ENCODE measurements at regions of chr5 and their contacts with region 1.

Region 1: GRCh38 chr5:66171349-66172344 is 27.5 kb downstream of the SREK1 start:
- DNase-seq: peak; percentile 68 to 81 (median 78)
- H3K4me3 ChIP-seq: no peak overlapping the region
- H3K4me3 Mint-ChIP-seq: peak overlapping the region in 3 of 8 donors; percentile 18 to 53 (median 26)
- H3K27ac ChIP-seq: peak overlapping the region; percentile 43
- H3K27ac Mint-ChIP-seq: peak overlapping the region; percentile 86 to 96 (median 90)
- H3K4me1 ChIP-seq: peaks cover 14% of the 10 kb centered on the region
- H3K4me1 Mint-ChIP-seq: peaks cover 18 to 33% (median 20%) of the 10 kb centered on the region in 4 donors
- H3K27me3 ChIP-seq: no peaks in the 10 kb centered on the region
- H3K27me3 Mint-ChIP-seq: no peaks in the 10 kb centered on the region

Region 2: GRCh38 chr5:65047948-65048690 is 1123.5 kb before region 1 on chr5:
- CTCF ChIA-PET with region 1: no interaction called
- POLR2A ChIA-PET with region 1: no interaction called
- intact Hi-C with region 1: no loop called
- DNase-seq: no peak
- H3K4me3 ChIP-seq: no peak overlapping the region
- H3K4me3 Mint-ChIP-seq: no peak overlapping the region
- H3K27ac ChIP-seq: no peak overlapping the region
- H3K27ac Mint-ChIP-seq: no peak overlapping the region
- H3K4me1 ChIP-seq: no peaks in the 10 kb centered on the region
- H3K4me1 Mint-ChIP-seq: no peaks in the 10 kb centered on the region
- H3K27me3 ChIP-seq: no peaks in the 10 kb centered on the region
- H3K27me3 Mint-ChIP-seq: no peaks in the 10 kb centered on the region

Region 3: DNA sequence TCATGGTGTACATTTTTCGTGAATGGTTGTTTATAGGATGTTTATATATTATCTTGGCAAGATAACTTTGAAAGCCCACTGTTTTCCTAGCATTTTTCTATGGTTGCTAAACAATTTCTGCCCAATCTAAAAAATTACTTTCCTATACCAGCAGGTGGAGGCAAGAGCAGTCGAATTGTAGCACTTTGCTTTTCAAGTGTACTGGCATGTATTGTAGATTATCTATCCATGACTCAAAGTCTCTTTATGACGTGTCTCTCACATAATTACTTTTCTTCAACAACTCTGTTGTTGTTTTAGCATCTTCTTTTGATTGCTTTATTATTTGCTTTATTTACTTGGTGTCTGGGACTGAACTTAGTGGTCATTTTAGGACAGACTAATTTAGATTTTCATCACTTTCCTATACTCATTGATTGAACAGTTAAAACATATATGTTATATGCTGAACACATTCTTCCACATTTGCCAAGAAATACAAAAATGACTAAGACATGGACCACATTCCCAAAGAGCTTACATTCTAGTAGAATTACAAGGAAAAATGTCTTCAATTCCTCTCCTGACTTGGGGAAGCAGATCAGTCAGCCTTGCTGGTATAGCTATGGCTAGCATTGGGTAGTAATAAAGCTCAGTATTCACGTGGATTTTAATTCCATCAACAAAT is 428.9 kb before region 1 on chr5:
- CTCF ChIA-PET with region 1: no interaction called
- POLR2A ChIA-PET with region 1: no interaction called
- intact Hi-C with region 1: loop called (anchors 1 kb)
- DNase-seq: peak in 4 of 5 donors; percentile 15 to 30 (median 17)
- H3K4me3 ChIP-seq: no peak overlapping the region
- H3K4me3 Mint-ChIP-seq: no peak overlapping the region
- H3K27ac ChIP-seq: no peak overlapping the region
- H3K27ac Mint-ChIP-seq: peak overlapping the region in 1 of 7 donors; percentile 1
- H3K4me1 ChIP-seq: no peaks in the 10 kb centered on the region
- H3K4me1 Mint-ChIP-seq: peaks cover 0 to 6% (median 0%) of the 10 kb centered on the region in 4 donors
- H3K27me3 ChIP-seq: no peaks in the 10 kb centered on the region
- H3K27me3 Mint-ChIP-seq: no peaks in the 10 kb centered on the region

Region 4: GRCh38 chr5:65760504-65761275 is 411.0 kb before region 1 on chr5:
- CTCF ChIA-PET with region 1: interaction called, 5 read pairs
- POLR2A ChIA-PET with region 1: interaction called, 6 read pairs
- intact Hi-C with region 1: loop called (anchors 1 kb)
- DNase-seq: peak; percentile 63 to 74 (median 68)
- H3K4me3 ChIP-seq: no peak overlapping the region
- H3K4me3 Mint-ChIP-seq: no peak overlapping the region
- H3K27ac ChIP-seq: no peak overlapping the region
- H3K27ac Mint-ChIP-seq: peak overlapping the region in 3 of 7 donors; percentile 1 to 53 (median 24)
- H3K4me1 ChIP-seq: peaks cover 5% of the 10 kb centered on the region
- H3K4me1 Mint-ChIP-seq: peaks cover 3 to 12% (median 6%) of the 10 kb centered on the region in 4 donors
- H3K27me3 ChIP-seq: no peaks in the 10 kb centered on the region
- H3K27me3 Mint-ChIP-seq: no peaks in the 10 kb centered on the region